ENCODE measurements at regions of chr22 and their contacts with region 1.

Region 1: GRCh38 chr22:17773606-17774205 is 563 bp downstream of the BID start:
- DNase-seq: peak; percentile 34 to 85 (median 46)
- ATAC-seq: peak; percentile 47
- H3K4me3 ChIP-seq: peak overlapping the region; percentile 76
- H3K4me3 Mint-ChIP-seq: peak overlapping the region; percentile 90
- H3K27ac ChIP-seq: no peak overlapping the region
- H3K27ac Mint-ChIP-seq: peak overlapping the region; percentile 90
- H3K4me1 ChIP-seq: peaks cover 85% of the 10 kb centered on the region
- H3K4me1 Mint-ChIP-seq: peaks cover 74% of the 10 kb centered on the region
- H3K27me3 ChIP-seq: no peaks in the 10 kb centered on the region
- H3K27me3 Mint-ChIP-seq: no peaks in the 10 kb centered on the region
- CTCF ChIP-seq: no peak

Region 2: GRCh38 chr22:17638432-17639246 is 135.1 kb before region 1 on chr22 and contains the start of gene BCL2L13:
- CTCF ChIA-PET with region 1: no interaction called
- POLR2A ChIA-PET with region 1: interaction called, 4 read pairs
- intact Hi-C with region 1: loop called in 1 of 2 experiments (anchors 10 kb)
- DNase-seq: peak; percentile 77 to 94 (median 84)
- ATAC-seq: peak; percentile 90
- H3K4me3 ChIP-seq: peak within 1 kb of the TSS; percentile 85
- H3K4me3 Mint-ChIP-seq: peak within 1 kb of the TSS; percentile 92
- H3K27ac ChIP-seq: peak within 1 kb of the TSS; percentile 98 to 99
- H3K27ac Mint-ChIP-seq: peak within 1 kb of the TSS; percentile 96
- H3K4me1 ChIP-seq: peaks cover 24% of the 10 kb centered on the region
- H3K4me1 Mint-ChIP-seq: peaks cover 31% of the 10 kb centered on the region
- H3K27me3 ChIP-seq: no peaks in the 10 kb centered on the region
- H3K27me3 Mint-ChIP-seq: no peaks in the 10 kb centered on the region
- CTCF ChIP-seq: no peak
- total RNA-seq, gene BCL2L13: 8.1 to 10.0 TPM

Region 3: GRCh38 chr22:17797721-17798559 is 24.2 kb after region 1 on chr22:
- CTCF ChIA-PET with region 1: no interaction called
- POLR2A ChIA-PET with region 1: no interaction called
- intact Hi-C with region 1: no loop called
- DNase-seq: peak in 2 of 14 experiments; percentile 43 to 52
- ATAC-seq: peak; percentile 26
- H3K4me3 ChIP-seq: no peak overlapping the region
- H3K4me3 Mint-ChIP-seq: no peak overlapping the region
- H3K27ac ChIP-seq: no peak overlapping the region
- H3K27ac Mint-ChIP-seq: no peak overlapping the region
- H3K4me1 ChIP-seq: no peaks in the 10 kb centered on the region
- H3K4me1 Mint-ChIP-seq: no peaks in the 10 kb centered on the region
- H3K27me3 ChIP-seq: no peaks in the 10 kb centered on the region
- H3K27me3 Mint-ChIP-seq: no peaks in the 10 kb centered on the region
- CTCF ChIP-seq: no peak